ENCODE measurements at regions of chr4 and their contacts with region 1.

Region 1: DNA sequence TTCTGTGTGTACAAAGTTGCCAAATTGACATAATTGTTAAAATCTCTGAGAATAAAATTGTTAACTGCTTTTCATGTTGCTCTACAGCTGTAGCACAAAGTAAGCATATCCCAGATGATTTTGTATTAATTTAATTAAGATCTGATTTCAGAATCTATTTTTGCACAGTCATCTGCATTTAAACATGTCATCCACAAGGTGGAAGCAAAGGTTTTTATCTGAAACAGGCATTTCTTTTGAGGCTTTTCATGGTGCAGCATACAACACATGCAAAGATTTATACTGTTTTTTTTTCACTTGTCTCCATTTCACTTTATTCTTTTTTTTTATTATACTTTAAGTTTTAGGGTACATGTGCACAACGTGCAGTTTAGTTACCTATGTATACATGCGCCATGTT is 51.2 kb downstream of the GC start:
- ATAC-seq: peak in 4 of 8 experiments; percentile 22 to 50 (median 34)
- H3K4me3 ChIP-seq: no peak overlapping the region
- H3K27ac ChIP-seq: no peak overlapping the region
- H3K4me1 ChIP-seq: no peaks in the 10 kb centered on the region

Region 2: GRCh38 chr4:71907782-71908181 is 175.1 kb after region 1 on chr4:
- in situ Hi-C with region 1: no loop called
- ATAC-seq: no peak
- H3K4me3 ChIP-seq: no peak overlapping the region
- H3K27ac ChIP-seq: no peak overlapping the region
- H3K4me1 ChIP-seq: no peaks in the 10 kb centered on the region

Region 3: DNA sequence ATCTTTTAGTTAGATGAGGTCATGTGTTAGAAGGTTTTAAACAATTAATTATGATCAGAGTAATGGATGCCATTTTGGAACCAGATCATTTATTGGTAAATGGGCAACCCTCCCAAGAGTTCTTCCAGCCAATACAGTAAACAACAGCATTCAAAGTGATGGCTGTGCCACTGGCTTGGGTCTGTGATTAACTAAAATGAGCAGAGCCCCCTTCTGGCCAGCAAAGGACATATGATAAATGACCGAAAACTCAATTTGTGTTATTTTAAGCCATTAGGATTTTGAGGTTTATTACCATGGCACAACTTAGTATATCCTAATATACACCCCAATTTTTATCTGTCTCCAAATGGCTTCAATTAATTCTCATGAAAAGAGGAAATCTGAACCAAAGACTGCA is 208.3 kb after region 1 on chr4:
- in situ Hi-C with region 1: loop called in 1 of 9 experiments (anchors 25 kb)
- ATAC-seq: peak in 3 of 8 experiments; percentile 21 to 42 (median 31)
- H3K4me3 ChIP-seq: no peak overlapping the region
- H3K27ac ChIP-seq: no peak overlapping the region
- H3K4me1 ChIP-seq: no peaks in the 10 kb centered on the region

Region 4: GRCh38 chr4:72255269-72255668 is 522.6 kb after region 1 on chr4:
- in situ Hi-C with region 1: loop called in 2 of 9 experiments (anchors 25 kb)
- ATAC-seq: no peak
- H3K4me3 ChIP-seq: no peak overlapping the region
- H3K27ac ChIP-seq: no peak overlapping the region
- H3K4me1 ChIP-seq: no peaks in the 10 kb centered on the region

Region 5: DNA sequence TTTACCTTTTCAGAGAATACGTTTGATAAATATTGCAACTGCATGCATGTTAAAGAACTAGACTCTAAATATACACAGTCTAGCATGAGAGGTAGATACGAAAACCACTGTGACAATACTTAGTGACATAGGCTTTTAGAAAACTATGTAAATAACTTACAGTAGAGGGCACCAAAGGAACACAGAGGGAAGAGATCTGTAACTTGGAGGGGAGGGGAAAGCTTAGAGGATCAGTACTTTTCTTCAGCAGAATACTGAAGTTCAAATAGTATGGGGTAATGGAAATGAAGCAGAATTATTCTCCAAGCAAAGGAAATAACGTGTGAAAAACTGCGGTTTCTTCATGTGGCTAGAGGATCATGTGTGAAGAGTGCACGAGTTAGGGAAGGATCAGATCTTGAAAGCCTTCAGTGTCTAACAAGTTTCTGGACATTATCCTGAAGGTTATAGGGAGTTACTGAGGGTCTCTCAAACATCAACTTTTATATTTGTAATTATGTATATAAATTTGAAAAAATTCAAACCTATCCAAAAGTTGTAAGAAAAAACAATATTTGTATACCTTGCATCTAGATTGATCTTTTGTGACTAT is 563.4 kb after region 1 on chr4:
- in situ Hi-C with region 1: loop called in 2 of 9 experiments (anchors 25 kb)
- ATAC-seq: peak; percentile 61 to 99 (median 87)
- H3K4me3 ChIP-seq: no peak overlapping the region
- H3K27ac ChIP-seq: no peak overlapping the region
- H3K4me1 ChIP-seq: no peaks in the 10 kb centered on the region

Region 6: GRCh38 chr4:72744103-72744725 is 1011.5 kb after region 1 on chr4:
- in situ Hi-C with region 1: no loop called
- ATAC-seq: no peak
- H3K4me3 ChIP-seq: no peak overlapping the region
- H3K27ac ChIP-seq: no peak overlapping the region
- H3K4me1 ChIP-seq: no peaks in the 10 kb centered on the region

Region 7: DNA sequence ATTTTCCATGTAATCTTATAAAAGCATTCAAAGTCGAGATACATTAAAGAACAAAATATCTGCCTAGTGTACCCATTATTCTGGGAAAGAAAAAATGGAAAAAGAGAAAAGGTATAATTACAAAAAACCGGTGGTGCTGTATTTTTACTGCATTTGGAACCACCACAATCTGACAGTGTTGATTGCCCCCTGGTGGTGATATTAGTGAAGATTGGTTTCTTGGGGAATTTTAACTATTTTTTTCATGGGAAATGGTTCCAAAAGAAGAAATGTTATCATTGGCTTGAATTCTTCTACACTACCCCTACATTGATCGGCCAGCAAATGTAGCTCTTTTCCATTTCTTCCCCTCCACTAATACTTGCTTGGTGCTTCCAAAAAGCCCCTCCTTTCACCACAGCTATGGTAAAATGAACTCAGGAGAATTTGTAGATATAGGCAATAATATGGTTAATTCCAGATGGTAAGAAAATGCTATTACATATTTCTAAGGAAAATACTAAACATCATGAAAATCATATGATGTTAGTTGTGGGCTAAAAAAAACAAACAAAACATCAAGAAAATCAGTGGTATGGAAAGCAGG is 1286.8 kb after region 1 on chr4:
- in situ Hi-C with region 1: loop called in 1 of 9 experiments (anchors 25 kb)
- ATAC-seq: peak in 1 of 8 experiments; percentile 26
- H3K4me3 ChIP-seq: no peak overlapping the region
- H3K27ac ChIP-seq: no peak overlapping the region
- H3K4me1 ChIP-seq: no peaks in the 10 kb centered on the region

Region 8: GRCh38 chr4:73036123-73036522 is 1303.4 kb after region 1 on chr4:
- in situ Hi-C with region 1: loop called in 1 of 9 experiments (anchors 25 kb)
- ATAC-seq: no peak
- H3K4me3 ChIP-seq: no peak overlapping the region
- H3K27ac ChIP-seq: no peak overlapping the region
- H3K4me1 ChIP-seq: no peaks in the 10 kb centered on the region

Measured in motor neuron (in vitro differentiated cells).